ENCODE measurements at regions of chr20 and their contacts with region 1.

Region 1: GRCh38 chr20:37564388-37565133 is 36.9 kb upstream of the BLCAP start:
- DNase-seq: peak; percentile 90
- H3K4me3 ChIP-seq: peak overlapping the region in 1 of 2 experiments; percentile 29; a peak in 1 of 4 replicates
- H3K27ac ChIP-seq: no peak overlapping the region
- H3K4me1 ChIP-seq: peaks cover 0 to 3% of the 10 kb centered on the region in 2 experiments; a peak in 1 of 4 replicates
- H3K27me3 ChIP-seq: peaks cover 13% of the 10 kb centered on the region
- CTCF ChIP-seq: peak; percentile 91
- EP300 ChIP-seq: no peak
- RAD21 ChIP-seq: peak; percentile 95

Region 2: DNA sequence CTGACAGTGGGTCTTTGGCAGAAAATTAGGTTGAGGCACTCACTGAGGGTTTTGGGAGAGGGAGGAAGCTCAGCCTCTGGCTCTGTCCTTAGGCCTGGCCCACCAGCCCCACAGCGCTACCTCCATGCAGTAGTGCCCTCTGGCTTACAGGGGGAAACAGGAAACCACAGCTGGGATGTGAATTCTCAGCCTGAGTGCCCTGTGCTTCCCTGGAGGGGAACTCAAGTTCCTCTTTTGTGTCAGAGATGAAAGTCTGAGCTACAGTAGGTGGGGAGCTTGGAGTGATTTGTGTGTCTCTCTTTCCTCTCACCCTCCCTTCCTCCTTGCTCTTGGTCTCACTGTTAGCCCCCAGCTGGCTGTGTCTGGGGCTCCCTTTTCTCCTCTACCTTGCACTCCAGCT is 11.3 kb after region 1 on chr20:
- CTCF ChIA-PET with region 1: interaction called, 44 read pairs
- POLR2A ChIA-PET with region 1: no interaction called
- DNase-seq: no peak
- H3K4me3 ChIP-seq: no peak overlapping the region
- H3K27ac ChIP-seq: no peak overlapping the region
- H3K4me1 ChIP-seq: peaks cover 0 to 3% of the 10 kb centered on the region in 2 experiments; a peak in 1 of 4 replicates
- H3K27me3 ChIP-seq: peaks cover 11% of the 10 kb centered on the region; the same call in 1 of the 2 replicates
- CTCF ChIP-seq: no peak
- EP300 ChIP-seq: no peak
- RAD21 ChIP-seq: no peak

Region 3: DNA sequence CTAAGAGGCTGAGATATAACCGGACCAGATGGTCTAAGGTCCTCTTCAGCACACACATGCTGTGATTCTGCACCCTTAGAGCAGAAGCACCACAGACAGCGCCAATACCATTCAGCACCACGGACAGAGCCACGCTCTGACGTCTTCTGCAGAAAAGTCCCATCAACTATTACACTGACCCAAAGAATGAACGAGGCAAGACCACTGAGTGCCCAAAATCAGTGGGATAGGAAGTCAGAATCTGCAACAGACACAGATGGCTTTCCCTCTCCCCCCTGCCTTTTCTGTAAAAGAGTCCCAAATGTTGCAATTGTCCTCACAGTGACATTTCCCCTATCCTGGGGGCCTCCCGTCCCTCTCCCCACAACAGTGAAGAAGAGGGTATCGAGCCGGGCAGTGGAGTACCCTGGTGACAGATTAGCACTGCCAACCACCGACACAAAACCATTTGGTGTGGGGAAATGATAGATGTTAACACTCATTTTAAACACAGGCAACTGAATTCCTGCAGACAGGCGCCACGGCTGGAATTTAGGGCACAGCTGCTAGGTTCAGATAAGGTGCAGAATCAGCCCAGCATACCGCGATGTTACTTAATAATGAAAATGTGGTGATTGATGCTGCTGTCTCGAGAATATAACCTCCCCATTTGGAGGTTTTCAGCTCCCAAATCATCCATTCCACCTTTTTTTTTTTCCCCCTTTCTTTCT is 62.7 kb after region 1 on chr20:
- CTCF ChIA-PET with region 1: interaction called, 10 read pairs
- POLR2A ChIA-PET with region 1: no interaction called
- DNase-seq: no peak
- H3K4me3 ChIP-seq: no peak overlapping the region
- H3K27ac ChIP-seq: no peak overlapping the region; a peak in 1 of 4 replicates
- H3K4me1 ChIP-seq: peaks cover 0 to 14% of the 10 kb centered on the region in 2 experiments; a peak in 2 of 4 replicates
- H3K27me3 ChIP-seq: peaks cover 8% of the 10 kb centered on the region; the same call in 1 of the 2 replicates
- CTCF ChIP-seq: no peak
- EP300 ChIP-seq: 0 out of 4 replicates have a peak, but pooled peaks of 1 of the 2 experiments have one; percentile 24
- RAD21 ChIP-seq: no peak

Region 4: DNA sequence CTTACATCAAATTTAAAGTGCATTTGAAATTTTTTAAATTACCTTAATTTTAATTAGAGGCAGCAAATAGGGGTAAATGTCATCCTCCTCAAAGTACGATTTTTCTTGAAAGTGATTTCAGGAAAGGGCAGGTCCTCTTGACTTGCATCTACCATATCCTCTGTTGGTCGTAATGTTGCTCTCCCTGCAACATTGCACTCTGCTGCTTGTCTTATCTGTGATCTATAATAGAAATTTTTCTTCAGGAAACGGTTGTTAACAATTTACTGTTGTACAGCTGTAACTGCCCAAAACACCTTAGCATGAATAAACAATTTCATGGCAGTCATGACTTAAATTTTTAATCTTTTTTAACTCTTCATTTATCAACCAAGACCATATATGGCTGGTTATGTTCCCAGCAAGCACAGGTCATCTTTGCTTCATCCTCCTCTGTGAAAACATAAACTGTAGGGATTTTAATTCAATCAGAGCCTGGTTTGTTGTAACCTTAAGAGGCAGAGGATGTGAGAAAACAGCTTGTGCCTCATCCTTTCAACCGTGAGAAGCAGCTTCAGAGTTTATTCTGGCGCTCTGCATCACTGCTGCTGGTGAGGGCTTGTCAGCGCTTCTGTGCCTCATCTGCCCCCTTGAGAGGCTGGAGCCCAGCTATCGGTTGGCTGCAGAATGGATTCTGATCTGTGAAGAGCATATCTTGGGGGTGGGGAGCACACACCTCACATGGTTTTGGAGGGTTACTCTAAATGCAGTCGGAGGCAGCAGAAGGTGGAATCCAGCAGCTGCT is 185.3 kb after region 1 on chr20:
- CTCF ChIA-PET with region 1: interaction called, 14 read pairs
- POLR2A ChIA-PET with region 1: no interaction called
- DNase-seq: no peak
- H3K4me3 ChIP-seq: no peak overlapping the region
- H3K27ac ChIP-seq: no peak overlapping the region
- H3K4me1 ChIP-seq: peaks cover 0 to 3% of the 10 kb centered on the region in 2 experiments; a peak in 1 of 4 replicates
- H3K27me3 ChIP-seq: no peaks in the 10 kb centered on the region
- CTCF ChIP-seq: no peak
- EP300 ChIP-seq: no peak
- RAD21 ChIP-seq: no peak

Region 5: GRCh38 chr20:37890643-37891042 is 326.1 kb after region 1 on chr20:
- CTCF ChIA-PET with region 1: interaction called, 23 read pairs
- POLR2A ChIA-PET with region 1: no interaction called
- DNase-seq: no peak
- H3K4me3 ChIP-seq: no peak overlapping the region
- H3K27ac ChIP-seq: no peak overlapping the region
- H3K4me1 ChIP-seq: no peaks in the 10 kb centered on the region; a peak in 1 of 4 replicates
- H3K27me3 ChIP-seq: no peaks in the 10 kb centered on the region
- CTCF ChIP-seq: no peak
- EP300 ChIP-seq: no peak
- RAD21 ChIP-seq: no peak

Region 6: DNA sequence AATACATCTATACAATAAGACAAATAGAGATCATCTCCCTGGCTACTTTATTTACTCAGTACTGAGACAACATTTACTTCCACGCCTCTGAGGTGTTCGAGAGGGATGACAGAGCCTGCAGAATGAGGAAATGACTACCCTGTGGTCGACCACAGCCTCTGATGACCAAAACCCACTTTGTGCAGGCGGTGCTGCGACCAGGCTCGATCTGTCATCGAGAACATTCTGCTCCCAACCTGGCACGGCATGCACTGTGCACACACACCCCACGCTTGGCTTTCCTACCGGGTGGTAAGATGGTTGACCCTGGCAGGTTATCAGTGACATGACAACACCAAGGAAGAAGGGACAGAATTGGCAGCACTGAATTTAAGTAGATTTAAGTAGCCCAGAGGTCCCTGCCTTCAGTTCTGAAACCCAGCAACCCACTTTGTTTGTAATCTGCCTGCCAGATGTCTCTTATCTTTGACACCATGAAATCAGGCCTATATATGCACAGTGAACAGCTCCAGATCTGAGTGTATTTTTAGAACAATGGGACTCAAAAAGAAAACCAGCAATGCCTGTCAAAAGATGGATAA is 426.1 kb after region 1 on chr20:
- CTCF ChIA-PET with region 1: interaction called, 65 read pairs
- POLR2A ChIA-PET with region 1: no interaction called
- DNase-seq: peak; percentile 67
- H3K4me3 ChIP-seq: no peak overlapping the region
- H3K27ac ChIP-seq: peak overlapping the region in 1 of 2 experiments; percentile 91; a peak in 2 of 4 replicates
- H3K4me1 ChIP-seq: peaks cover 4 to 72% of the 10 kb centered on the region in 2 experiments; a peak in 3 of 4 replicates
- H3K27me3 ChIP-seq: no peaks in the 10 kb centered on the region
- CTCF ChIP-seq: no peak
- EP300 ChIP-seq: peak in 1 of 2 experiments; percentile 92; a peak in 2 of 4 replicates
- RAD21 ChIP-seq: no peak

Region 7: GRCh38 chr20:38050686-38051085 is 486.1 kb after region 1 on chr20:
- CTCF ChIA-PET with region 1: interaction called, 11 read pairs
- POLR2A ChIA-PET with region 1: no interaction called
- DNase-seq: no peak
- H3K4me3 ChIP-seq: no peak overlapping the region
- H3K27ac ChIP-seq: peak overlapping the region; percentile 47 to 61; a peak in 3 of 4 replicates
- H3K4me1 ChIP-seq: peaks cover 0 to 13% of the 10 kb centered on the region in 2 experiments; a peak in 3 of 4 replicates
- H3K27me3 ChIP-seq: no peaks in the 10 kb centered on the region
- CTCF ChIP-seq: no peak
- EP300 ChIP-seq: no peak
- RAD21 ChIP-seq: no peak

Measured in SK-N-SH (cell line).